ENCODE measurements at regions of chr15 and their contacts with region 1.

Region 1: DNA sequence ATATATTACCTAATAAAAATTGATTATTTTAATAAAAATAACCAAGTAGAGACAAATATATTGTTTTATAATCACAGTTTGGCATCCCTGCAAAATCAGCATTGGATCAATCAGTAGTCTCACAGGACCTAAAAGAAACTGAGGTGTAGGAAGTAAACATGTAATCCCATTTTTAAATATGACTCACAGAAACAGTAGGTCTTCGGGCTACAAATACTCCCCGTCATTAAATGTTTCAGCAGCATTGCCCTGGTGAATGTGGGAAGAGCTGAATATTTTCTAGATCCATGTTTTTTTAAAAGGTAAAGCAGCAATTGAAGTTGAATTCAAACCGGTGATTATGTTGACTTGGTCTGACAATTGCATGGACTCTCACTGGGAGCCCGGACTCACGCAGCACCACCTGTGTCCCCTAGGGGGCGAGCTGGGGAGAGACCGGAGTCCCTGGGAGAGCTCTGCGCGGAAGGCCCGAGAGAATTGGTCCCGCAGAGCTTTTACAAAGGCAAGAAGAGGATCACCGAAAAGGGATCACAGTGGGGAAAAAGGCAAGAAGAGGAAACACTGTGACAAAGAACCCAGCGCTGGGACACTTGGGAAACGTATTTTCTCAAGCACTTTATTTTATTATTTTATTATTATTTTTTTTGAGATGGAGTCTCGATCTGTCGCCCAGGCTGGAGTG is 17.2 kb upstream of the USP3 start:
- DNase-seq: peak; percentile 68 to 89 (median 83)
- ATAC-seq: peak; percentile 86
- H3K4me3 ChIP-seq: no peak overlapping the region
- H3K4me3 Mint-ChIP-seq: peak overlapping the region; percentile 50 to 84 (median 59)
- H3K27ac ChIP-seq: peak overlapping the region; percentile 10
- H3K27ac Mint-ChIP-seq: peak overlapping the region; percentile 47 to 99 (median 82)
- H3K4me1 ChIP-seq: peaks cover 30 to 55% of the 10 kb centered on the region in 2 donors
- H3K4me1 Mint-ChIP-seq: peaks cover 40 to 88% (median 71%) of the 10 kb centered on the region in 7 donors
- H3K27me3 ChIP-seq: no peaks in the 10 kb centered on the region
- H3K27me3 Mint-ChIP-seq: no peaks in the 10 kb centered on the region

Region 2: DNA sequence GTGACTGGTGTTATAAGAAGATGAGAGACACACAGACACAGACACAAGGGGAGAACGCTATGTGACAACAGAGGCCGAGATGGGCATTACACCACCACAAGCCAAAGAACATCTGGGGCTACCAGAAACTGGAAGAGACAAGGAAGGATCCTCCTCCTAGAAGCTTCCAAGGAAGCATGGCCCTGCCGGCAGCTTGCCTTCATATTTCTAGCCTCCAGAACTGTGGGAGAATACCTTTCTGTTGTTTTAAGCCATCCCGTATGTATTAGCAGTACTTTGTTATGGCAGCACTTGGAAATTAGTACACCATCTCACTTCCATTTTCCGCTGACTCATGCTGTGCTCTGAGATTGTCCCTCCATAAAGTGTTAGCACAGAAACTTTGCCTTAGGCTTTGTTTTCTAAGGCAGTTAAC is 66.9 kb before region 1 on chr15:
- CTCF ChIA-PET with region 1: no interaction called
- POLR2A ChIA-PET with region 1: no interaction called
- intact Hi-C with region 1: no loop called
- DNase-seq: no peak
- ATAC-seq: no peak
- H3K4me3 ChIP-seq: no peak overlapping the region
- H3K4me3 Mint-ChIP-seq: no peak overlapping the region
- H3K27ac ChIP-seq: no peak overlapping the region
- H3K27ac Mint-ChIP-seq: no peak overlapping the region
- H3K4me1 ChIP-seq: no peaks in the 10 kb centered on the region
- H3K4me1 Mint-ChIP-seq: peaks cover 0 to 3% (median 0%) of the 10 kb centered on the region in 7 donors
- H3K27me3 ChIP-seq: no peaks in the 10 kb centered on the region
- H3K27me3 Mint-ChIP-seq: no peaks in the 10 kb centered on the region

Region 3: GRCh38 chr15:63466378-63467192 is 20.6 kb before region 1 on chr15:
- CTCF ChIA-PET with region 1: interaction called, 11 read pairs
- POLR2A ChIA-PET with region 1: interaction called, 281 read pairs
- intact Hi-C with region 1: loop called (anchors 1 to 2 kb)
- DNase-seq: peak in 8 of 9 donors; percentile 46 to 80 (median 74)
- ATAC-seq: peak; percentile 95
- H3K4me3 ChIP-seq: no peak overlapping the region
- H3K4me3 Mint-ChIP-seq: peak overlapping the region in 2 of 10 donors; percentile 5 to 6
- H3K27ac ChIP-seq: no peak overlapping the region
- H3K27ac Mint-ChIP-seq: peak overlapping the region; percentile 37 to 96 (median 82)
- H3K4me1 ChIP-seq: peaks cover 0 to 4% of the 10 kb centered on the region in 2 donors
- H3K4me1 Mint-ChIP-seq: peaks cover 12 to 43% (median 33%) of the 10 kb centered on the region in 7 donors
- H3K27me3 ChIP-seq: no peaks in the 10 kb centered on the region
- H3K27me3 Mint-ChIP-seq: peaks cover 0 to 18% (median 0%) of the 10 kb centered on the region in 5 donors

Region 4: DNA sequence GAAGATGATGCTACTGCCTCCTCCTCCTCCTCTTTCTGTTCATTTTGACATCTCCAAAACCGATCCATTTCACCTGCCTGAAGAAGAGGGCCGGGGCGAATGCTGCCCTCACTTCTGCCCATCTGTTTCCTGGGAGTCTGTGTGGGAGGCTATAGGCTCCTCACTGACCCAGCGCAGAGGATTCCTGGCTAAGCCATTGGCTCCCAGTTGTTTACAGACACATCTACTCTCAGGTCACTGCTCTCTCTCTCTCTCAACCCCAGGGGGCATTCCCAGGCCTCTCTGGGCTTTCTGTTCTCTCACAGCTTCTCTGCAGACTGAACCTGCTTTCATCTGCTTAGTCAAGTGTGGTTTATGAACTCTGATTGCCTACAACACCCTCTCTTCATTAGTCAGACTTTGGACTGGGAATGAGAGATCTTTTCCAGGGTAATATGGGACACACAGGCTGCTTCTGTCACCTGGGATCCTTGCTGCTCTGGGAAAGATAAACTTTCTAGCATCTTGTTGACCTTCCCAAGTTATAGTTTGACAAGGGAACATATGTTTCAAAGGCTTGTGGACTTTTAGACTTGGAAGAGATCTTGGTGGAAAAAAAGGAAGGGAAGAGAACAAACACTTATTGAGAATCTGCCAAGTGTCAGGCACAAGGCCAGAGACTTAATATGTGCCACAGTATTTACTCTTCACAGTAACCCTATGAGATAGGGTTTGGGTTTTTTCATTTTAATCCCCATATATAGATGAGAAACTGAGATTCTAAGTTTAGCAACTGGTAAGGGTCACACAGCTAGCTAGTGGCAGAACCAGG is 13.0 kb before region 1 on chr15:
- CTCF ChIA-PET with region 1: interaction called, 10 read pairs
- POLR2A ChIA-PET with region 1: interaction called, 281 read pairs
- intact Hi-C with region 1: loop called (anchors 1 kb)
- DNase-seq: peak in 5 of 9 donors; percentile 36 to 76 (median 51)
- ATAC-seq: peak; percentile 86
- H3K4me3 ChIP-seq: no peak overlapping the region
- H3K4me3 Mint-ChIP-seq: peak overlapping the region in 8 of 10 donors; percentile 44 to 75 (median 65)
- H3K27ac ChIP-seq: peak overlapping the region; percentile 50
- H3K27ac Mint-ChIP-seq: peak overlapping the region; percentile 86 to 98 (median 94)
- H3K4me1 ChIP-seq: peaks cover 11 to 44% of the 10 kb centered on the region in 2 donors
- H3K4me1 Mint-ChIP-seq: peaks cover 32 to 70% (median 61%) of the 10 kb centered on the region in 7 donors
- H3K27me3 ChIP-seq: no peaks in the 10 kb centered on the region
- H3K27me3 Mint-ChIP-seq: no peaks in the 10 kb centered on the region

Region 5: GRCh38 chr15:63497642-63498467 is 10.6 kb after region 1 on chr15:
- CTCF ChIA-PET with region 1: interaction called, 70 read pairs
- POLR2A ChIA-PET with region 1: interaction called, 392 read pairs
- intact Hi-C with region 1: loop called (anchors 1 kb)
- DNase-seq: peak; percentile 52 to 89 (median 82)
- ATAC-seq: peak; percentile 90
- H3K4me3 ChIP-seq: peak overlapping the region; percentile 6
- H3K4me3 Mint-ChIP-seq: no peak overlapping the region
- H3K27ac ChIP-seq: peak overlapping the region; percentile 97
- H3K27ac Mint-ChIP-seq: no peak overlapping the region
- H3K4me1 ChIP-seq: peaks cover 84 to 91% of the 10 kb centered on the region in 2 donors
- H3K4me1 Mint-ChIP-seq: peaks cover 17 to 80% (median 57%) of the 10 kb centered on the region in 7 donors
- H3K27me3 ChIP-seq: no peaks in the 10 kb centered on the region
- H3K27me3 Mint-ChIP-seq: no peaks in the 10 kb centered on the region

Region 6: DNA sequence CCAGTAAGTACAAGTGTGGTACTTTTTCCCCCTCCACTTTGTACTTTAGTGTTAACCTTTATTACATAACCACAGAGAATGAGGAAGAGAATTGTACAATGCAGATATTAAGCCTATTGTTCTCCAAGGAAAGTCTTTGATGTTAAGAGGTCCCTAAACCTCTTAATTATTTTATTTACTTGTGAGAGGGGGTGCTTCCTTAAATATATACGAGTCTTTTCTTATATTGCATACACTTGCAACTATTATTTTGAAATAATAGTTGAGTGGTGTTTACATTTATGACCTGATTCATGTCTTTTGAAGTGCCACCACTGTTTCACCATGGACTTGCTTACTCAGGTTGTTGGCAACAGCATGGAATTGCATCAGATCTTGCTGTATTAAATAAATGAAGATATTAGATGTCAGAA is 27.3 kb after region 1 on chr15:
- CTCF ChIA-PET with region 1: interaction called, 12 read pairs
- POLR2A ChIA-PET with region 1: interaction called, 6 read pairs
- intact Hi-C with region 1: no loop called
- DNase-seq: no peak
- ATAC-seq: peak; percentile 40
- H3K4me3 ChIP-seq: no peak overlapping the region
- H3K4me3 Mint-ChIP-seq: peak overlapping the region in 9 of 10 donors; percentile 9 to 80 (median 65)
- H3K27ac ChIP-seq: no peak overlapping the region
- H3K27ac Mint-ChIP-seq: peak overlapping the region in 7 of 9 donors; percentile 26 to 88 (median 79)
- H3K4me1 ChIP-seq: peaks cover 57 to 84% of the 10 kb centered on the region in 2 donors
- H3K4me1 Mint-ChIP-seq: peaks cover 58 to 99% (median 97%) of the 10 kb centered on the region in 7 donors
- H3K27me3 ChIP-seq: no peaks in the 10 kb centered on the region
- H3K27me3 Mint-ChIP-seq: no peaks in the 10 kb centered on the region

Region 7: GRCh38 chr15:63531586-63531985 is 44.4 kb after region 1 on chr15:
- CTCF ChIA-PET with region 1: interaction called, 4 read pairs
- POLR2A ChIA-PET with region 1: interaction called, 4 read pairs
- intact Hi-C with region 1: loop called in 1 of 2 experiments (anchors 2 kb)
- DNase-seq: no peak
- ATAC-seq: peak; percentile 61
- H3K4me3 ChIP-seq: no peak overlapping the region
- H3K4me3 Mint-ChIP-seq: peak overlapping the region in 6 of 10 donors; percentile 5 to 49 (median 16)
- H3K27ac ChIP-seq: no peak overlapping the region
- H3K27ac Mint-ChIP-seq: peak overlapping the region in 6 of 9 donors; percentile 21 to 71 (median 36)
- H3K4me1 ChIP-seq: peaks cover 12 to 48% of the 10 kb centered on the region in 2 donors
- H3K4me1 Mint-ChIP-seq: peaks cover 53 to 95% (median 93%) of the 10 kb centered on the region in 7 donors
- H3K27me3 ChIP-seq: no peaks in the 10 kb centered on the region
- H3K27me3 Mint-ChIP-seq: no peaks in the 10 kb centered on the region

Region 8: GRCh38 chr15:63539521-63539920 is 52.3 kb after region 1 on chr15:
- CTCF ChIA-PET with region 1: interaction called, 8 read pairs
- POLR2A ChIA-PET with region 1: interaction called, 6 read pairs
- intact Hi-C with region 1: loop called in 1 of 2 experiments (anchors 5 kb)
- DNase-seq: no peak
- ATAC-seq: no peak
- H3K4me3 ChIP-seq: no peak overlapping the region
- H3K4me3 Mint-ChIP-seq: no peak overlapping the region
- H3K27ac ChIP-seq: no peak overlapping the region
- H3K27ac Mint-ChIP-seq: peak overlapping the region in 4 of 9 donors; percentile 5 to 69 (median 13)
- H3K4me1 ChIP-seq: peaks cover 5 to 7% of the 10 kb centered on the region in 2 donors
- H3K4me1 Mint-ChIP-seq: peaks cover 30 to 80% (median 73%) of the 10 kb centered on the region in 7 donors
- H3K27me3 ChIP-seq: no peaks in the 10 kb centered on the region
- H3K27me3 Mint-ChIP-seq: no peaks in the 10 kb centered on the region

Measured in naive thymus-derived CD4-positive, alpha-beta T cell (primary cell).